Cardiac septum (tissue), 1 donor: ENCODE measurements at regions of chr16 and their contacts with region 1.

Region 1: DNA sequence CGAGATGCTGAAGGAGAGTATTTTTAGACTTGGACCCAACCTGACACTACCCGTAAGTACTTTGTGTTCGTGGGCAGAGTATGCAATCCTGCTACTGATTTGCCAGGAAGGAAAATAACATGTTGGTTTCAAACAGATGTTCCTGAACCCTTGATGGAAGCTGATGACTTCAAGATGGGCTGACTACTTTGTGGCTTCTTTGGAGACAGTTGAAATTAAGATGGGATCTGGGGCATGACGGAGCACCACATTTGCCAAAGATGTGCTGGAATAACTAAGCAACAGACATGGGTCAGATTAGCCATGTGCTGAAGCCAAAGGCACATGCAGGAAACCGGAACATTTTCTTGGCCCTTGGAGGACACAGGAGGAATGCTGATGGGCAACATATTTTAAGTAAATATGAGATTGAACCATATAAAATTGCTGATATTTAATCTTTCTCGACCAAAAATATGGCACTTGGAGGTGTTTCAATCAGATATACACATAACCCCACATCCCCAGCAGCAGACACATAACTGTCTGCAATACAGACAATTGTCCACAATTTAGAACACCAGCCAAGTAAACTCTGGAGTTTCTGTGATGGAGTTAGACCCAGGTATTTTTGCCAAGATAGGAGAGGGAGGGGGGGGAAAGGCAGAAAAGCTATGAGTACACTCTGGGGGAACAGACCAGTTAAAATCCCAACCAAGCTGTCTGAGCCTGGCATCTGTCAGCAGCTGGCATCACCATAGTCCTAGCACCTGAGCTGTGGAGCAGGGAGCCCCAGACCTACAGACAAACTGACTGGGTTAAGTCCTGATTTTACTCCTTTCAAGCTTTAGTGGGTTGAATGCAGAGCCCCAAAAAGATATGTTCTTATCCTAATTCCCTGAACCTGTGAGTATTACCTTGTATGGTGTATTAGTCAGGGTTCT is 329.4 kb upstream of the CDH5 start:
- DNase-seq: no peak

Region 2: DNA sequence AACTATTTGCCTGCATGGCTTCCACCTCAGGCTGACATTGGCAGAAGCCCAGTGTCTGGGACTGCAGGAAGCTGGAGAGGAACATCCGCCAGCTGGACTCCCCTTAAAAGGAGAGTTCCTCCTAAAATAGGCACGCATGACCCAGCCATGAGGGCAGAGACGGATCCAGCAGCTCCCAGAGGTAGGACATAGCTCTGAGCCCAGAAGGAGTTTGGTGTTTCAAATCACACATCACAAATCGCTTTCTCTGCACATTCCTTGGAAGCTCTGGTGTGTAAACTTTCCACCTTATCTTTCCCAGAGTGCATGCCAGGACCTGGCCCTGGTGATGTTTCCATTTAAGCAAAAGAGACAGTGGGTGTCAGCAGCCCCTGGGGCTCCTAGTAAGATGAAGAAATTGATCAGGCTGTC is 98.4 kb after region 1 on chr16:
- intact Hi-C with region 1: loop called (anchors 10 kb)
- DNase-seq: peak; percentile 83

Region 3: DNA sequence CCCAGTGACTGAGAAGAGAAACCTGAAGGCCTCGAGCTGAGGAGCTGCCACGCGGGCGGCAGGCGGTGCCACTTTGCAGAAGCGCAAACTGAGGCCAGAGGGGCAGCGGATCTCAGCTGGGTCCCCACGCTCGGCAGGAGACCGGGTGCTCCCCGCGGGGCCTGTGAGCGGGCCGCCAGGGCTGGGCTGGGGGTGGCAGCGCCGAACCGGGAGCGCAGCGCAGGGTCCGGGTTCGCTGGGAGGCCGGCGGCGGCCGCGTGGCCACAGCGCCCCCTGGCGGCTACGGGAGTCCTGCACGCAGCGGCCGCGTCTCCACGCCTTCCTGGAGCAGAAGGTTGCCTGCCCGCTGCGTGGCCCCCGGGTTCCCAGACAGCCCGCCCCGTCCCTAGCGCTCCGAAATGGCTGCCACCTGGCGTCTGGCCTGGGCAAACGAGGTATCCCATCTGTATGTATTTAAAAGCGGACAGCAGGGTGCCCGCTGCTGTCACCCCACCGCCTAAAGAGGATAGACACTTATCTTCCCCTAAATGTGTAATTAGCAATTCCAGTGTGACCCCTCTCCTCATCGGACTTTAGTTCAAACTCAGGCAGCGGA is 233.4 kb after region 1 on chr16:
- intact Hi-C with region 1: loop called (anchors 10 kb)
- DNase-seq: peak; percentile 91